Transverse colon (tissue), 4 donors: ENCODE measurements at regions of chr2 and their contacts with region 1.

Region 1: GRCh38 chr2:136764452-136765255 is 691 bp upstream of the THSD7B start:
- DNase-seq: no peak
- H3K4me3 ChIP-seq: peak overlapping the region in 3 of 4 donors; percentile 25 to 45 (median 30)
- H3K27ac ChIP-seq: no peak overlapping the region
- H3K4me1 ChIP-seq: peaks cover 0 to 4% (median 1%) of the 10 kb centered on the region in 4 donors
- H3K27me3 ChIP-seq: peaks cover 41% of the 10 kb centered on the region
- CTCF ChIP-seq: no peak
- EP300 ChIP-seq: no peak
- POLR2A ChIP-seq: no peak

Region 2: GRCh38 chr2:136746672-136747071 is 18.0 kb before region 1 on chr2:
- in situ Hi-C with region 1: no loop called
- intact Hi-C with region 1: no loop called
- DNase-seq: no peak
- H3K4me3 ChIP-seq: no peak overlapping the region
- H3K27ac ChIP-seq: no peak overlapping the region
- H3K4me1 ChIP-seq: no peaks in the 10 kb centered on the region
- H3K27me3 ChIP-seq: no peaks in the 10 kb centered on the region
- CTCF ChIP-seq: no peak
- EP300 ChIP-seq: no peak
- POLR2A ChIP-seq: no peak

Region 3: GRCh38 chr2:137220438-137220993 is 455.9 kb after region 1 on chr2:
- in situ Hi-C with region 1: no loop called
- intact Hi-C with region 1: loop called (anchors 5 kb)
- DNase-seq: no peak
- H3K4me3 ChIP-seq: no peak overlapping the region
- H3K27ac ChIP-seq: no peak overlapping the region
- H3K4me1 ChIP-seq: no peaks in the 10 kb centered on the region
- H3K27me3 ChIP-seq: no peaks in the 10 kb centered on the region
- CTCF ChIP-seq: no peak
- EP300 ChIP-seq: no peak
- POLR2A ChIP-seq: no peak